ENCODE measurements at regions of chrX and their contacts with region 1.

Region 1: GRCh38 chrX:38985375-38985774 is 184.1 kb downstream of the MID1IP1 start:
- DNase-seq: no peak
- ATAC-seq: peak; percentile 35

Region 2: GRCh38 chrX:38803586-38804431 is 181.6 kb before region 1 on chrX:
- intact Hi-C with region 1: loop called (anchors 10 kb)
- DNase-seq: peak; percentile 91
- ATAC-seq: peak; percentile 86

Measured in left ventricle myocardium superior (tissue), 1 donor.